ENCODE measurements at regions of chr9 and their contacts with region 1.

Region 1: GRCh38 chr9:125829743-125830142 is 82.6 kb downstream of the PBX3 start:
- DNase-seq: peak; percentile 58 to 78 (median 66)
- H3K4me3 ChIP-seq: peak overlapping the region; percentile 52 to 61
- H3K4me3 Mint-ChIP-seq: peak overlapping the region; percentile 85 to 93 (median 90)
- H3K27ac ChIP-seq: peak overlapping the region; percentile 40
- H3K27ac Mint-ChIP-seq: peak overlapping the region; percentile 87 to 97 (median 93)
- H3K4me1 ChIP-seq: peaks cover 28% of the 10 kb centered on the region
- H3K4me1 Mint-ChIP-seq: peaks cover 11 to 29% (median 19%) of the 10 kb centered on the region in 4 donors
- H3K27me3 ChIP-seq: no peaks in the 10 kb centered on the region
- H3K27me3 Mint-ChIP-seq: no peaks in the 10 kb centered on the region

Region 2: DNA sequence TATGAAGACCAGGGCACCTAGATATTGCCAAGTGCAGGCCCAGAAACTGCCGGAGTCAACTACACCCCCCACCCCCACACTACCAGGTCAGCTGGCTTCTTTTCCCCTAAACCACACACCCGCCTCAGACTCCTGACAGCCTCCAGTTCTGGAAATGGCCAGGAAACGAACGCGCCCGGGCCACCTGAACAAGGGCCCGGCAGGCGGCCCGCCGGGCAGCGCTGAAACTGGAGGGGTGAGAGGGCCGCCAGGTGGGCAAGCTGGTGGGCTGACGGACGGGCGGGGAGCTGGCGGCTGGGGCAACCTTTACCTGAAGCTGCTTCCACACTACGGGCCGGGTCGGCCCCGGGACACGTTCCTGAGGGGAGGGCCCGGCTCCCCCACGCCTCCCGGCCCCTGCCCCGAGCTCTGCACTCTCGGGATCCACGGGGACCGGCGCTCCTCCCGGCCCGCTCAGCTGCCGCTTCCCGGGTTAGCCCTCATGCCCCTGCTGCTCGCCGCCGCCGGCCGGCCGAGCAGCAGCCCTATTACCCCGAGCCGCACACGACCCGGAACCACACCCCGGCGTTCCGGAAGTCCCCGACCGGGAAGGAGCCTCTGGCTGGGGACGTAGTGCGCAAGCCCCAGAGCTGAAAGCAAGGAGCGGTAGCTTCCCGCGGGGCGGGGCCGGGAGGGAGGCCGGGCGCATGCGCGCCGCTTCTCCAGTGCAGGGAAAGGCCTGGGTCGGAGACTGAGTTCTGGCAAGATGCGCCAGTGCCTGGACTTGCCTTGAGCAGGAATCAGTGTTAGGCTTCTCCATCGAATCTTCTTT is 122.9 kb before region 1 on chr9 and contains the start of gene MAPKAP1:
- CTCF ChIA-PET with region 1: no interaction called
- POLR2A ChIA-PET with region 1: interaction called, 13 read pairs
- intact Hi-C with region 1: loop called (anchors 1 kb)
- DNase-seq: peak; percentile 88 to 92 (median 88)
- H3K4me3 ChIP-seq: peak within 1 kb of the TSS; percentile 18 to 56
- H3K4me3 Mint-ChIP-seq: peak within 1 kb of the TSS; percentile 89 to 91 (median 90)
- H3K27ac ChIP-seq: peak within 1 kb of the TSS; percentile 65
- H3K27ac Mint-ChIP-seq: peak within 1 kb of the TSS; percentile 68 to 92 (median 89)
- H3K4me1 ChIP-seq: peaks cover 24% of the 10 kb centered on the region
- H3K4me1 Mint-ChIP-seq: peaks cover 26 to 44% (median 36%) of the 10 kb centered on the region in 4 donors
- H3K27me3 ChIP-seq: no peaks in the 10 kb centered on the region
- H3K27me3 Mint-ChIP-seq: peaks cover 0 to 2% of the 10 kb centered on the region in 2 donors
- total RNA-seq, gene MAPKAP1: 51.6 to 55.6 TPM